Activated naive CD4-positive, alpha-beta T cell treated with anti-CD3 and anti-CD28 coated beads for 36 hours (primary cell): ENCODE measurements at regions of chr1 and their contacts with region 1.

Region 1: GRCh38 chr1:44799770-44800584 is at the start of gene PLK3:
- DNase-seq: peak; percentile 99
- H3K4me3 Mint-ChIP-seq: peak within 1 kb of the TSS; percentile 81
- H3K27ac Mint-ChIP-seq: peak within 1 kb of the TSS; percentile 100
- H3K4me1 Mint-ChIP-seq: peaks cover 36% of the 10 kb centered on the region
- H3K27me3 Mint-ChIP-seq: no peaks in the 10 kb centered on the region
- total RNA-seq, gene PLK3: 44.2 to 46.7 TPM

Region 2: GRCh38 chr1:44327679-44328491 is 472.1 kb before region 1 on chr1:
- CTCF ChIA-PET with region 1: no interaction called
- intact Hi-C with region 1: no loop called
- DNase-seq: no peak
- H3K4me3 Mint-ChIP-seq: no peak overlapping the region
- H3K27ac Mint-ChIP-seq: no peak overlapping the region
- H3K4me1 Mint-ChIP-seq: no peaks in the 10 kb centered on the region
- H3K27me3 Mint-ChIP-seq: no peaks in the 10 kb centered on the region

Region 3: DNA sequence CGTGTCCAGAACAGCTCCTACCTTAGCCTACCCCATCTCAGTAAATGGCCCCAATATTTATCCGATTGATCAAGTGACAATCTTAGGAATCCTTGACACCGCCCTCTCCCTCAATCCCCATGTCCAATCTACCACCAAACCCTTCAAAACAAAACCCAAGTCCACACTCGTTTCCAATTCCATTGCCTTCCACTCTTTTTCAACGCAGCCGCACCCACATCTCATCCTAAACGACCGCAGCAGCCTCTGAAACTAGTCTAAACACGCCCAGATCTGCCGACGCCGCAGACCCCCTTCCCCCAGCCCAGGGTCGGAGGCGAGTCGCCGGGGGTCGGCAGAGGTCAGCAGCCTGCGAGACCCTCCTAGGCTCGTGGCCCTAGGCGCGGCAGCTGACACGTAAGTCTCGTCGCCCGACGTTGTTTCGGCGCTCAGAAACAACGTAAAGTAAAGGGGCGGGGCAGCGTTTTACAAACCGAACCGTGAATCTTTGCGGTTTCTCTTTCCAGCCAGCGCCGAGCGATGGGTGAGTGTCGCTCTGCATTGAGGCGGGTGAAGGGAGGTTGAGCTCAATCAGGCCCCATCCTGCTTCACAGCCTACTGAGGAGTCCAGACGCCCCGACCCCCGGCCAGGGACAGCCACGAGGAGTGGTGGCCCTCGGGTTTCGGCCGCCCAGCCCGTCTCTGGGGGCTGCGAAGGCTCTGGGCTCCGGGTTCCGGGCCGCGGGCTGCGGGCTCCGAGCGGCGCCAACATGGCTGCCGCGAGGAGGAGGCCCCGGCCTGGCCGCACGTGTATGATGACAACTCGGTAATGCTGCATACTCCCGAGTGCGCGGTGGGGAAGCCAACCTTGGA is 24.7 kb before region 1 on chr1 and contains the start of gene RPS8:
- CTCF ChIA-PET with region 1: interaction called, 4 read pairs
- intact Hi-C with region 1: loop called (anchors 2 kb)
- DNase-seq: peak; percentile 94
- H3K4me3 Mint-ChIP-seq: peak within 1 kb of the TSS; percentile 95
- H3K27ac Mint-ChIP-seq: peak within 1 kb of the TSS; percentile 92
- H3K4me1 Mint-ChIP-seq: peaks cover 32% of the 10 kb centered on the region
- H3K27me3 Mint-ChIP-seq: no peaks in the 10 kb centered on the region
- total RNA-seq, gene RPS8: 3,619 to 3,772 TPM

Region 4: DNA sequence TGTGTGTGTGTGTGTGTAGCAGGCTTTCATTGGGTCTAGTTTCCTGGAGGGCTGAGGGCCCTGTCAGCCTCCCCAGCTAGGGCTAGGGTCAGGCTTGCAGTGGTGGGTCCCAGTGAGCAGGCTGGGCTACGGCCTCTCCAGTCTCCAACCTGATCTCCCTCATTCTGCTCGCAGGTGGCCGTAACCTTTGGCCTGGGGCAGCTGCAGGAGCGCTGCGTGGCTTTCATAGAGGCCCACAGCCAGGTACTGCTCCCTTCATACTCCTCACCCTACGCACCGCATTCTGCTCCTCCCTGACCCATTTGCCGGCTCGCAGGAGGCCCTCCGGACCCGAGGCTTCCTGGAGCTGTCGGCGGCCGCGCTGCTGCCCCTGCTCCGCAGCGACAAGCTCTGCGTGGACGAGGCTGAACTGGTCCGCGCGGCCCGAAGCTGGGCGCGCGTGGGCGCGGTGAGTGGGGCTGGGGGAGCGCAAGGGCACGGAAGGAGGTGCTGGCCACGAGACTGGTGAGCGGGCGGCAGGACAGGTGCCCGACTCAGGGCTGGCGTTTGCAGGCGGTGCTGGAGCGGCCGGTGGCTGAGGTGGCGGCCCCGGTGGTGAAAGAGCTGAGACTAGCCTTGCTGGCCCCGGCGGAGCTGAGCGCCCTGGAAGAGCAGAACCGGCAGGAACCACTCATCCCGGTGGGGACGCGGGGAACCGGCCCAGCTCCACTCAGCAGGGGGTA is 13.0 kb after region 1 on chr1:
- CTCF ChIA-PET with region 1: interaction called, 41 read pairs
- intact Hi-C with region 1: loop called (anchors 1 kb)
- DNase-seq: no peak
- H3K4me3 Mint-ChIP-seq: peak overlapping the region; percentile 34
- H3K27ac Mint-ChIP-seq: peak overlapping the region; percentile 100
- H3K4me1 Mint-ChIP-seq: peaks cover 64% of the 10 kb centered on the region
- H3K27me3 Mint-ChIP-seq: no peaks in the 10 kb centered on the region

Region 5: GRCh38 chr1:44819608-44820327 is 19.8 kb after region 1 on chr1:
- CTCF ChIA-PET with region 1: interaction called, 41 read pairs
- intact Hi-C with region 1: loop called (anchors 2 kb)
- DNase-seq: peak; percentile 86
- H3K4me3 Mint-ChIP-seq: peak overlapping the region; percentile 88
- H3K27ac Mint-ChIP-seq: peak overlapping the region; percentile 99
- H3K4me1 Mint-ChIP-seq: peaks cover 34% of the 10 kb centered on the region
- H3K27me3 Mint-ChIP-seq: no peaks in the 10 kb centered on the region